Endothelial cell of umbilical vein (primary cell): ENCODE measurements at regions of chr17 and their contacts with region 1.

Region 1: DNA sequence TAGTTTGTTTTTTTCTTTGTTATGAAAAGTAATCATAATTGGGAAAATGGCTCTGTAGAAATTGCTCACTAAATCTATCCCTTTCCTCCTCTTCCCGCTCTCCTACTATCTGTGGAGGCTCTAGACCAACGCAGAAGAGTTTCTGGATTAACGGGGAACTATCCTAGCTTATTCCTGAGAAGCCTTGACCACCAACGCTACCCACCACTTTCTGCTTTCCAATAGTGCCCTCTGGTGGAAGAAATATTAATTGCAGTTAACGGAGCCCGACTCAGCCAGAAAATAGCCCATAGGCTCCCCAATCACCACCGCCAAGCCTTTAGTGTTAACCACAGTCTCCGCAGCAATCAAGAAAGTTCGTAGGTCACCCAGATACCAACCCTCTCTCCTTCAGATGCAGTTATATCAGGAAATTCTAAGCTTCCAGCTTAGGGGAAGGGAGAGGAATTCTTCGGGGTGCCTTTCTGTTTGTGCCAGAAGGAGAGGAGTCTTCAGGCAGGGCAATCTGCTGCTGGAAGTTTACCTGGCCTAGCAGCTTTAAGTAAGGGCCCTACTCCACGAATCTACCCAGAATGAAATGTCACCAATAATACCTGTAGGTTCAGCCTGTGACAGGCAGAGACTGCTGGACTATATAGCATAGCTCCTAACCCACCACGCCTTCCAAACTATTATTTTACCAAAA is 23.0 kb upstream of the NSRP1 start:
- DNase-seq: peak; percentile 72
- H3K4me3 ChIP-seq: no peak overlapping the region
- H3K27ac ChIP-seq: no peak overlapping the region
- H3K4me1 ChIP-seq: no peaks in the 10 kb centered on the region
- H3K27me3 ChIP-seq: no peaks in the 10 kb centered on the region
- CTCF ChIP-seq: peak; percentile 52 to 80
- POLR2A ChIP-seq: no peak

Region 2: DNA sequence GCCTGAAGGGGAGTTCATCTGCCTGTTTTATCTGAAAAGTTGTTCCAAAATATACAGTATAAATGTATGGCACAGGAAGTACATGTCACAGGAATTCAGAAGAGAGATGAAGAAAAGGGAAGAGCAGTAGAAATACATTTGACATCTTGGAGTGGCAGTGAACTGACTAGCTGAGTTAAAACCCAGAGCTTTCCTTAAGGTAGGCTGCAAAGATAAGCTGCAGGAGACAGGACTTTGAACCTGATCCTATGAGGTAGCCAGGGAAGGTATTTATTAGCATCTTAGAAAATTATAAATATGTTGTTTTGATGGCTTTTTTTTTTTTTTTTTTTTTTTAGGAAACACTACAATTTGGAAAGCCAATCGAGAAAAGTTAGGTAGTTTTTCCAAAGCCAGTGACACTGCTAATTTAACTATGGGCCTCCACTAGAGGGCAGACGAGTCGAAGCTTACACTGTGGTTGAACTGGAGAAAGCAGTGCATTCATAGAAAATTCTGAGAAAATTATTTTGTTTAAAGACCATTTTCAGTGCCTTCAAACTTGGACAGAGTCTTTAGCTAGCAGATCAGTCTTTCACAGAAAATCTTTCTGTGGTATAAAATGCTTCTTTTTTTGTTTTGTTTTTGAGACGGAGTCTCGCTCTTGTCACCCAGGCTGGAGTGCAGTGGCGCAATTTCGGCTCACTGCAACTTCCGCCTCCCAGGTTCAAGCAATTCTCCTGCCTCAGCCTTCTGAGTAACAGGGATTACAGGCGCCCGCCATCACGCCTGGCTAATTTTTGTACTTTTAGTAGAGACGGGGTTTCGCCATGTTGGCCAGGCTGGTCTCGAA is 285.9 kb before region 1 on chr17:
- CTCF ChIA-PET with region 1: interaction called, 74 read pairs
- POLR2A ChIA-PET with region 1: no interaction called
- dilution Hi-C with region 1: no loop called
- intact Hi-C with region 1: loop called (anchors 1 kb)
- DNase-seq: peak; percentile 67
- H3K4me3 ChIP-seq: no peak overlapping the region
- H3K27ac ChIP-seq: no peak overlapping the region
- H3K4me1 ChIP-seq: no peaks in the 10 kb centered on the region
- H3K27me3 ChIP-seq: no peaks in the 10 kb centered on the region
- CTCF ChIP-seq: peak; percentile 61 to 64
- POLR2A ChIP-seq: no peak

Region 3: GRCh38 chr17:29941334-29941733 is 152.3 kb before region 1 on chr17 and contains the start of gene EFCAB5:
- CTCF ChIA-PET with region 1: interaction called, 10 read pairs
- POLR2A ChIA-PET with region 1: no interaction called
- dilution Hi-C with region 1: no loop called
- intact Hi-C with region 1: loop called (anchors 10 kb)
- DNase-seq: no peak
- H3K4me3 ChIP-seq: no peak within 1 kb of the TSS
- H3K27ac ChIP-seq: no peak within 1 kb of the TSS
- H3K4me1 ChIP-seq: peaks cover 8% of the 10 kb centered on the region
- H3K27me3 ChIP-seq: no peaks in the 10 kb centered on the region
- CTCF ChIP-seq: no peak
- POLR2A ChIP-seq: no peak
- total RNA-seq, gene EFCAB5: 0.40 and 0.44 TPM in 2 replicates

Region 4: GRCh38 chr17:30031214-30031869 is 62.3 kb before region 1 on chr17:
- CTCF ChIA-PET with region 1: interaction called, 206 read pairs
- POLR2A ChIA-PET with region 1: no interaction called
- dilution Hi-C with region 1: no loop called
- intact Hi-C with region 1: loop called (anchors 1 kb)
- DNase-seq: no peak
- H3K4me3 ChIP-seq: no peak overlapping the region
- H3K27ac ChIP-seq: no peak overlapping the region
- H3K4me1 ChIP-seq: no peaks in the 10 kb centered on the region
- H3K27me3 ChIP-seq: peaks cover 2 to 4% of the 10 kb centered on the region in 2 experiments
- CTCF ChIP-seq: no peak
- POLR2A ChIP-seq: no peak

Region 5: DNA sequence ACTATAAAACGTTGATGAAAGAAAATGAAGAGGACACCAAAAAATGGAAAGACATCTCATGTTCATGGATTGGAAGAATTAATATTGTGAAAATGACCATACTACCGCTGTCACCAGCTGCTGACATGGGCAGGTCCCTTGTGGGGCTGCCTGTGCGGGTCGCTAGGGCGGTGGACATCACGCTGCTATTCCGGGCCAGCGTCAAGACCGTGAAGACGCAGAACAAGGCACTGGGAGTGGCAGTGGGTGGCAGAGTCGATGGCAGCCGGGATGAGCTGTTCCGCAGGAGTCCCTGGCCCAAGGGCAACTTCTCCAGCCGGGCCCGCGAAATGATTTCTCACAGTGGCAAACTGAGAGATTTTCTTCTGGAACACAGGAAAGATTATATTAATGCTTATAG is 25.1 kb before region 1 on chr17:
- CTCF ChIA-PET with region 1: interaction called, 14 read pairs
- POLR2A ChIA-PET with region 1: no interaction called
- dilution Hi-C with region 1: no loop called
- intact Hi-C with region 1: no loop called
- DNase-seq: no peak
- H3K4me3 ChIP-seq: no peak overlapping the region
- H3K27ac ChIP-seq: no peak overlapping the region
- H3K4me1 ChIP-seq: no peaks in the 10 kb centered on the region
- H3K27me3 ChIP-seq: peaks cover 0 to 16% of the 10 kb centered on the region in 2 experiments
- CTCF ChIP-seq: no peak
- POLR2A ChIP-seq: no peak

Region 6: DNA sequence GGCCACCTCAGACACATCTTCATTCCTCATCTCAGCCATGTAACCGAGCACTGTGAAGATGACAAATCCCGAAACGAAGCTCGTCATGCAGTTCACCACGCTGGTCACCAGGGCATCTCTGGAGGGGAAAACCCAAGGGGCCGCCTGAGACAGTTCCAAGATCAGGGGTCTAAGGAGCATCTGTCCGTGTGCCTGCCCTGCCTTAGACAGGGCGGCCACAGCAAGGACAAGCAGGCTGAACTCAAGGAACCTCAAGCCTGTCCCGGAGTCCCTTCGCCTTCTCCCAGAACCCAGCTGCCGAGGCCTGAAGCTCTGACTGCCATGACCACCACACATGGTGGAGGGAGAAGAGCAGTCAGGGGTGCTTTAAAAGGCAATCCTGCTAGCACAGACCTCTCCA is 119.1 kb after region 1 on chr17:
- CTCF ChIA-PET with region 1: no interaction called
- POLR2A ChIA-PET with region 1: no interaction called
- dilution Hi-C with region 1: no loop called
- intact Hi-C with region 1: no loop called
- DNase-seq: no peak
- H3K4me3 ChIP-seq: no peak overlapping the region
- H3K27ac ChIP-seq: no peak overlapping the region
- H3K4me1 ChIP-seq: no peaks in the 10 kb centered on the region
- H3K27me3 ChIP-seq: no peaks in the 10 kb centered on the region
- CTCF ChIP-seq: no peak
- POLR2A ChIP-seq: no peak